ENCODE measurements at regions of chr6 and their contacts with region 1.

Region 1: GRCh38 chr6:75512591-75512990 is 19.0 kb upstream of the FILIP1 start:
- DNase-seq: no peak
- H3K4me3 ChIP-seq: no peak overlapping the region
- H3K27ac ChIP-seq: peak overlapping the region in 1 of 4 donors; percentile 3
- H3K4me1 ChIP-seq: peaks cover 0 to 7% (median 0%) of the 10 kb centered on the region in 4 donors
- H3K27me3 ChIP-seq: no peaks in the 10 kb centered on the region
- CTCF ChIP-seq: no peak
- EP300 ChIP-seq: no peak
- POLR2A ChIP-seq: no peak

Region 2: DNA sequence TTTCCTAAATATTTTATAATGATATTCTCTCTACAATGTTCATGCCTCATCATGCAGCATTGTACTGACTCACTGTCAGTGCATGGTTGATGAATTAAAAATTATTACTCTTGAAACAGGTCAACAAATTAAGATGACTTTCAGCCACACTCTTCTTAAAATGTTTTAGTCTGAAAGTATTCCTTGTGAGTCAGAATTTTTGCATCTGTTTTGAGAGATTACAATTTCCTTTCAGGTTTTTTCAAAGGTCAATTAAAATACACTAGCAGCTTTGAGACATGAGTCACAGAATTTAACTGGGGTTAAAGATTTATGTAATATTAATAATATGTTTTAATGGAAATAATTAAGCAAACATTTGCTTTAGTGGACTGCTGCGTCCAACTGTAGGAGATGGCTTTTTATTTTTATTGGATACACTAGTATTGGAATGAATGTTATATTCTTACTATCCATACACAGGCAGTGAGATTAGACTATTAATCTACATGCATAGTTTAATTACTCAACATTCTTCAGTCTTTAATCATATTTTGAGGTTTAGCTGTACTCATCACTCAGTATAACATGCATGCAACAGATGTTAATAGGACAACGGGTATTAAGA is 316.4 kb before region 1 on chr6:
- intact Hi-C with region 1: no loop called
- DNase-seq: no peak
- H3K4me3 ChIP-seq: no peak overlapping the region
- H3K27ac ChIP-seq: no peak overlapping the region
- H3K4me1 ChIP-seq: peaks cover 0 to 33% (median 7%) of the 10 kb centered on the region in 4 donors
- H3K27me3 ChIP-seq: no peaks in the 10 kb centered on the region
- CTCF ChIP-seq: no peak
- EP300 ChIP-seq: no peak
- POLR2A ChIP-seq: no peak

Region 3: DNA sequence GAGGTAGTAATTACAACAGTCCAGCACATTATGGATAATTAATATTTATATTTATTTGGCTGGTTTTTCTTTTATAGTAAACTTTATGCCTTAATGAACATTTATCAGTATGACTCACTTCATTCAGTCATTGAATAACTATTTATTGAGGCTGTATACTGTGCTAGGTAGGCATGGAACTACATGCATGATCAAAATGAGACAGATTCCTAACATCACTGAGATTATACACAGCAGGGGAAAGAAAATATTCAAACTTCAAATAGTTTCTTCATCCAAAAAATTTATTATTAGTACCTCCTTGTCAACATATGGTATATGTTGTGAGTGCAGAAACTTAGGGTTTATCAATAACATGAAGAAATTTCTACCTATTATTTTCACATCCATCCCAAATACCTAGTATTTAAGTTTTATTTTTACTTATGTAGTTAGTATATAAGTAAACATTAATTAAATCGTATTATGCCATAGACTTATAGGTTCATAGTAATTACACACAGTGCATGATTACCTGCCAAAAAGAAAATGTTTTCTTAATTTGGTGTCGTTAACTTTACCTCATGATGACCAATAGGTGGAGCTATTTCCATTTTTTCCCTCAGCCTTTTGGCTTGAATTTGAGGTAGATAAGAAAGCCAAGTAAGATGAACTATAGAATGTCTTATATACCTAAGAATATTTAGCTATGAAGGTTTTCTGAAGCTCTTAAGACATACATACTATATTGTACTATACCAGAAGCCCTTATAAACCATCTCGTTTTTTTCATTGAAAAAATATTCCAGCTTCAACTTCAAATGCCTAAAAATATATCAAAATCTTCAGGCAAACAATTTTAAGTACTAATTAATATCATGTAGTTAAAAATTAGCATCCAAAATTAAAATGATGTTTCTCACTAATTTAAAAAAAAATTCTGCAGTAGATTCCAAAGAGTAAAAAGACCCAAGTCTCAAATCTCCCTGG is 215.5 kb before region 1 on chr6:
- intact Hi-C with region 1: loop called (anchors 5 kb)
- DNase-seq: no peak
- H3K4me3 ChIP-seq: no peak overlapping the region
- H3K27ac ChIP-seq: peak overlapping the region in 1 of 4 donors; percentile 24
- H3K4me1 ChIP-seq: peaks cover 0 to 34% (median 26%) of the 10 kb centered on the region in 4 donors
- H3K27me3 ChIP-seq: no peaks in the 10 kb centered on the region
- CTCF ChIP-seq: peak; percentile 20 to 67 (median 62)
- EP300 ChIP-seq: no peak
- POLR2A ChIP-seq: no peak

Region 4: DNA sequence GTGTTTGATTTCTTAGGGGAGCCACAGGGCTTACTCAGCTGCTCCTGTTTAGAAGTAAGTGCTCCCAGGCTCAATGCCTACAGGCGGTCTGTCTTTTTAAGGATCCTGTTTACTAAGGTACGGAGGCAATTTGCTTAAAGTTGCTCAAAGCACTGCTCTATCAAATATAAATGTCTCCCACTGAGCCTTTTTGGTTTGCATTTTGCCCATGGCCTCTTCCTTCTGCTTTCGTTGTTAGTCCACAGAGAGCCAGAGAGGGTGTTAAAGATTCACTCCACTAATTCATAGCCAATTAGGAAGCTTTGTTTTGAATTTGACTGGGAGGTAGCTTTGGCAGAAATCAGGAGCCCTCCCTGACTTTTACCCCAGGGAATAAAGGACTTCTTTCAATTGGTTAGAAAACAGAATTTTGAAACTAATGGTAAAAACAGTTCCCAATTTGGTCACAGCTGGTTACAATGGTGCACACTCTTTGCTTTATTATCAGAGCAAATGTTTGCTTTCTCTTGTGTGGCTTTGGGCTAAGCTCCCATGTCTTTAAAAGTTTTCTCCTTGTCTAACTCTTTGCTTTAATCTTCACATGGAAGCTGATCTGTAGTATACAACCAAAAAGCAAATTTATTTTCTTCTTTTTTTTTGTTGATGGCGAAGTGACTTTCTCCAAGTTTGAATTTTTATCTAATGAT is 433.7 kb after region 1 on chr6:
- intact Hi-C with region 1: no loop called
- DNase-seq: no peak
- H3K4me3 ChIP-seq: no peak overlapping the region
- H3K27ac ChIP-seq: no peak overlapping the region
- H3K4me1 ChIP-seq: no peaks in the 10 kb centered on the region
- H3K27me3 ChIP-seq: no peaks in the 10 kb centered on the region
- CTCF ChIP-seq: no peak
- EP300 ChIP-seq: no peak
- POLR2A ChIP-seq: no peak

Measured in sigmoid colon (tissue), 7 donors.